ENCODE measurements at regions of chr1 and their contacts with region 1.

Region 1: GRCh38 chr1:185559684-185560331 is 174.4 kb upstream of the HMCN1 start:
- DNase-seq: peak; percentile 56 to 60 (median 59)
- H3K4me3 ChIP-seq: no peak overlapping the region
- H3K4me3 Mint-ChIP-seq: peak overlapping the region in 6 of 8 donors; percentile 5 to 78 (median 62)
- H3K27ac ChIP-seq: no peak overlapping the region
- H3K27ac Mint-ChIP-seq: peak overlapping the region; percentile 76 to 94 (median 86)
- H3K4me1 ChIP-seq: peaks cover 51% of the 10 kb centered on the region
- H3K4me1 Mint-ChIP-seq: peaks cover 39 to 52% (median 46%) of the 10 kb centered on the region in 4 donors
- H3K27me3 ChIP-seq: no peaks in the 10 kb centered on the region
- H3K27me3 Mint-ChIP-seq: no peaks in the 10 kb centered on the region

Region 2: GRCh38 chr1:184743062-184743756 is 816.6 kb before region 1 on chr1:
- CTCF ChIA-PET with region 1: no interaction called
- POLR2A ChIA-PET with region 1: no interaction called
- intact Hi-C with region 1: loop called (anchors 2 kb)
- DNase-seq: peak; percentile 73 to 84 (median 78)
- H3K4me3 ChIP-seq: no peak overlapping the region
- H3K4me3 Mint-ChIP-seq: peak overlapping the region; percentile 15 to 80 (median 70)
- H3K27ac ChIP-seq: peak overlapping the region; percentile 47
- H3K27ac Mint-ChIP-seq: peak overlapping the region; percentile 83 to 97 (median 95)
- H3K4me1 ChIP-seq: peaks cover 62% of the 10 kb centered on the region
- H3K4me1 Mint-ChIP-seq: peaks cover 46 to 68% (median 61%) of the 10 kb centered on the region in 4 donors
- H3K27me3 ChIP-seq: no peaks in the 10 kb centered on the region
- H3K27me3 Mint-ChIP-seq: no peaks in the 10 kb centered on the region